Activated CD4-positive, alpha-beta memory T cell treated with anti-CD3 and anti-CD28 coated beads for 36 hours (primary cell): ENCODE measurements at regions of chr19 and their contacts with region 1.

Region 1: GRCh38 chr19:24033301-24033962 is 53.6 kb upstream of the ZNF254 start:
- DNase-seq: peak; percentile 91
- H3K4me3 Mint-ChIP-seq: peak overlapping the region; percentile 99
- H3K27ac Mint-ChIP-seq: peak overlapping the region; percentile 97
- H3K4me1 Mint-ChIP-seq: peaks cover 52% of the 10 kb centered on the region
- H3K27me3 Mint-ChIP-seq: no peaks in the 10 kb centered on the region

Region 2: DNA sequence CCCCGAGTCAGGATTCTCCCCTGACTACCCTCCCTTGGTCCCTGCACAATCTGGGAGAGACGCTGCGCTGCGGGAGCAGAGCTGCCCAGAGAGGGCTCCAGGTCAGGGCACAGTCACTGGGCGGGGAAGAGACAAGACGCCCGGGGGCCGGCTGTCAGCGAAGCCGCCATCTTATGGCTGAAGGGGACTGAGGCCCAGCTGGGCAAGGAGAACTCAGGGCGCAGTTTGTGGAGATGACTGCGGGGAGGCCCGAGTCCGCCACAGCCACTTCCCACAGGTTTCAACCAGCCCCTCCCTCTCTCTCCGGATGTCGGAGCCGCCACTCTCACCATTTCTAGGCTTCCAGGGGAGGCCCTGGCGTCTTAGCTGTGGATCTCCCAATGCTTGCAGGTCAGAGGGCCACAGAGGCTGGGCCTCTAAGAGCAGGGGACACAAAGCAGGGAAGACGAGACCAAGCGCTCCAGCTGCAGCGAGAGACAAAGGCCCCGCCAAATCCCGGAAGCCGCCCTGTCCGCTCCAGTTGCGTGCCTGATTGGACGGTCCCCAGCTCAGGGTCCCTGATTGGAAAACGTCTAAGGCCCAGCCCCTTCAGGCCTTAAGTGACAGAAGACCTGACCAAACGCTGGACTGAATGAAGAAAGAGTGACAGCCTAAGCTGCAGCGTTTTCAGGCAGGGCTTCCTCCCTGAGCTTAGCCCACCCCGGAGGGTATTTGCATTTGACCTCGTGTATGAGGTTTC is 783.4 kb before region 1 on chr19 and contains the start of gene ZNF724:
- CTCF ChIA-PET with region 1: no interaction called
- POLR2A ChIA-PET with region 1: no interaction called
- intact Hi-C with region 1: loop called (anchors 2 kb)
- DNase-seq: peak; percentile 94
- H3K4me3 Mint-ChIP-seq: peak within 1 kb of the TSS; percentile 94
- H3K27ac Mint-ChIP-seq: peak within 1 kb of the TSS; percentile 92
- H3K4me1 Mint-ChIP-seq: peaks cover 9% of the 10 kb centered on the region
- H3K27me3 Mint-ChIP-seq: no peaks in the 10 kb centered on the region
- total RNA-seq, gene ZNF724: 13.6 to 14.5 TPM

Region 3: DNA sequence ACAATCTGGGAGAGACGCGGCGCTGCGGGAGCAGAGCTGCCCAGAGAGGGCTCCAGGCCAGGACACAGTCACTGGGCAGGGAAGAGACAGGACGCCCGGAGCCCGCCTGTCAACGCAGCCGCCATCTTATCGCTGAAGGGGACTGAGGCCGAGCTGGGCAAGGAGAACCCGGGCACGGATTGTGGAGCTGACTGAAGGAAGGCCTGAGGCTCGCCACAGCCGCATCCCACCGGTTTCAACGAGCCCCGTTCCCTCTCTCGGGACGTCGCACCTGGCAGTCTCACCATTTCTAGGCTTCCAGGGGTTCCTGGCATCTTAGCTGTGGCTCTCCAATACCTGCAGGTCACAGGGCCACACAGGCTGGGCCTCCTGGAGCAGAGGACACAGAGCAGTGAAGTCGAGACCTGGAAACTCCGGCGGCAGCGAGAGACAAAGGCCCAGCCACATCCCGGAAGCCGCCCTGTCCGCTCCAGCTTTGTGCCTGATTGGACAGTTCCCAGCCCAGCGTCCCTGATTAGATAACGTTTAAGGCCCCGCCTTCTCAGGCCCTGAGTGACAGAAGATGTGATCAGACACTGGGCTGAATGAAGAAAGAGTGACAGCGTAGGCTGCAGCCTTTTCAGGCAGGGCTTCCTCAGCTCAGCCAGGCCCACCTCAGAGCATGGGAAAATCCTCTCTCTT is 638.3 kb before region 1 on chr19 and contains the start of gene ZNF91:
- CTCF ChIA-PET with region 1: no interaction called
- POLR2A ChIA-PET with region 1: interaction called, 5 read pairs
- intact Hi-C with region 1: loop called (anchors 1 kb)
- DNase-seq: peak; percentile 95
- H3K4me3 Mint-ChIP-seq: peak within 1 kb of the TSS; percentile 96
- H3K27ac Mint-ChIP-seq: peak within 1 kb of the TSS; percentile 97
- H3K4me1 Mint-ChIP-seq: peaks cover 30% of the 10 kb centered on the region
- H3K27me3 Mint-ChIP-seq: no peaks in the 10 kb centered on the region
- total RNA-seq, gene ZNF91: 34.7 to 39.0 TPM

Region 4: GRCh38 chr19:23914402-23915301 is 118.8 kb before region 1 on chr19 and contains the start of gene ZNF726:
- CTCF ChIA-PET with region 1: interaction called, 6 read pairs
- POLR2A ChIA-PET with region 1: interaction called, 19 read pairs
- intact Hi-C with region 1: loop called (anchors 1 kb)
- DNase-seq: peak; percentile 93
- H3K4me3 Mint-ChIP-seq: peak within 1 kb of the TSS; percentile 95
- H3K27ac Mint-ChIP-seq: peak within 1 kb of the TSS; percentile 91
- H3K4me1 Mint-ChIP-seq: peaks cover 18% of the 10 kb centered on the region
- H3K27me3 Mint-ChIP-seq: no peaks in the 10 kb centered on the region
- total RNA-seq, gene ZNF726: 15.9 to 17.3 TPM

Region 5: GRCh38 chr19:24086974-24087595 is 53.7 kb after region 1 on chr19 and contains the start of gene ZNF254:
- CTCF ChIA-PET with region 1: interaction called, 3 read pairs
- POLR2A ChIA-PET with region 1: interaction called, 15 read pairs
- intact Hi-C with region 1: loop called (anchors 1 kb)
- DNase-seq: peak; percentile 90
- H3K4me3 Mint-ChIP-seq: peak within 1 kb of the TSS; percentile 95
- H3K27ac Mint-ChIP-seq: peak within 1 kb of the TSS; percentile 91
- H3K4me1 Mint-ChIP-seq: peaks cover 5% of the 10 kb centered on the region
- H3K27me3 Mint-ChIP-seq: no peaks in the 10 kb centered on the region
- total RNA-seq, gene ZNF254: 6.7 to 7.7 TPM

Region 6: DNA sequence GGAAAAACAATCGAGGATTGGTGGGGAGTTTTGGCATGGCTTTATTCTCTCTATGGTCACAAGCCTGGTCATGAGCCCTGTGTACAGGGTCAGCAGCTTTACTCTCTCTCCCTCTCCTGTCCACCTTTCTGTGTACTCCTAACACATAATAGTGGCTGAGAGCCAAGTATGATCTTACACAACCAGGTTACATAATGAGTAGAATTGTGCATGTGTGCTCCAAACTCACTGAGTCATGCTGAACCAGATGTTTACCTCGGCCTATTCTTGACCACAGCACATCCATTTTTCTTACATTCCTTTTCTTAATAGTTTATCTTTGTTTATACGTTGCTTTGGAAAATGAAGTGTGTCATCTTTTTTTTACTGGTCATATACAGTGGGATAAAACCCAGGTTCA is 106.7 kb after region 1 on chr19:
- CTCF ChIA-PET with region 1: no interaction called
- POLR2A ChIA-PET with region 1: no interaction called
- intact Hi-C with region 1: no loop called
- DNase-seq: no peak
- H3K4me3 Mint-ChIP-seq: no peak overlapping the region
- H3K27ac Mint-ChIP-seq: no peak overlapping the region
- H3K4me1 Mint-ChIP-seq: no peaks in the 10 kb centered on the region
- H3K27me3 Mint-ChIP-seq: no peaks in the 10 kb centered on the region